Breast epithelium (tissue), 4 donors: ENCODE measurements at regions of chr13 and their contacts with region 1.

Region 1: GRCh38 chr13:104900186-104900817 is 1635.2 kb downstream of the EFNB2 start:
- DNase-seq: no peak
- H3K4me3 ChIP-seq: no peak overlapping the region
- H3K27ac ChIP-seq: no peak overlapping the region
- H3K4me1 ChIP-seq: no peaks in the 10 kb centered on the region
- H3K27me3 ChIP-seq: no peaks in the 10 kb centered on the region
- CTCF ChIP-seq: no peak
- POLR2A ChIP-seq: no peak

Region 2: DNA sequence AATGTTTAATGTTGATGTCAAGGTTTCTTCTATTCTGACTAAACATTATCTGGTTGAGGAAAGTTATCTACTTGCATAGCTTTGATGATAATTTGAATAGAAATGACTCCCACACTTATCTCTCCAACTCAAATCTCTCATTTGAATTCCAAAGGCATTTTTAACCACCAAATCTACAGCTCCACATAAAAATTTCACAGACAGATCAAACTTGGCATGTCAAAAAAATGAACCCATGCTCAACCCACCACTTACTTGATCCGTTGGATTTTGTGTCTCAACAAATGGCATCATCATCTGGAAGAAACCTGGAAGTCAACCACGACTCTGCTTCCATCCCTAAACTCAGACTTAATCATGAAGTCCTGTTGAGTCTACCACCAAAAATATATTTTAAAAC is 584.8 kb after region 1 on chr13:
- intact Hi-C with region 1: loop called (anchors 5 kb)
- DNase-seq: no peak
- H3K4me3 ChIP-seq: no peak overlapping the region
- H3K27ac ChIP-seq: no peak overlapping the region
- H3K4me1 ChIP-seq: no peaks in the 10 kb centered on the region
- H3K27me3 ChIP-seq: no peaks in the 10 kb centered on the region
- CTCF ChIP-seq: no peak
- POLR2A ChIP-seq: no peak

Region 3: DNA sequence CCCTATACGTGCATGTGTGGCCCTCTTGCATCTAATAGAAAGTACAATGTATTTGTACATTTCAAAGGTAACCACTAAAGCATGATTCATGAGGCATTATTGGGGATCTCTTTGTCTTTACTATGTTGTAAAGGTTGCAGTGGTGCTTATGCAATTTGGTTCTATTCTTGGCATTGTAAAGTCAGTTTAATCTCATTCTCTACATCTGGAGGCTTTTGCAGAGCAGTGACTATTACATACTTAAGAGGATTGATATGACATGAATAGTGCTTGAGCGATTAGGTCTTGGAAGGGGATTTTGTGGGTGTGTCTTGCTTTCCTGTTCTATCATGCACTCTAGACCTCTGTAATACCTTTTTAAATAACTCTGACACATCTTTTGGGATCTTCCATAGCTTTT is 1025.2 kb after region 1 on chr13:
- intact Hi-C with region 1: no loop called
- DNase-seq: no peak
- H3K4me3 ChIP-seq: no peak overlapping the region
- H3K27ac ChIP-seq: no peak overlapping the region
- H3K4me1 ChIP-seq: no peaks in the 10 kb centered on the region
- H3K27me3 ChIP-seq: no peaks in the 10 kb centered on the region
- CTCF ChIP-seq: no peak
- POLR2A ChIP-seq: no peak